Posterior vena cava (tissue), 2 donors: ENCODE measurements at regions of chr1 and their contacts with region 1.

Region 1: GRCh38 chr1:200118779-200119505 is 91.4 kb downstream of the NR5A2 start:
- DNase-seq: no peak

Region 2: GRCh38 chr1:200090252-200091096 is 28.5 kb before region 1 on chr1:
- intact Hi-C with region 1: loop called in 1 of 2 experiments (anchors 2 kb)
- DNase-seq: no peak

Region 3: GRCh38 chr1:200409761-200410565 is 291.0 kb after region 1 on chr1 and contains the start of gene ZNF281:
- intact Hi-C with region 1: no loop called
- DNase-seq: peak; percentile 99
- total RNA-seq, gene ZNF281: 8.9 to 12.0 TPM